Natural killer cell (primary cell): ENCODE measurements at regions of chrX and their contacts with region 1.

Region 1: DNA sequence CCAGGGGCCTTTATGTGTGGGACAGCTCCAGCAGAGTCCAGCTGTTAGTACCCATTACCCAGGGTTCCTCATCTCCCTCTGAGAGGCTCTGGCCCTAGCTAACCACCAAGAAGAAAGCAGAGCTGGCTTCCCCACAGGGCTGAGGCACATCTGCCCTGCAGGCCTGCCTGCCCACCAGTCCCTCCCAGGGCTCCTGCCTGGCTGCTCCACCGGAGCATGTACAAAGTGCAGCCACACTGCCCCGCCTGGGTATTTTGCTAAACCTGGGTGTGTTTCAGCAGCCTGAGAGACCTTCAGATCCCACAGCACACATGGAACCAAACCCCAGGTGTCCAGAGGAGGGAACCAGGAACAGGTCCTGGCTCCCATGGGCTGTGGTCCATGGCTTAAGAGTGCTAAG is 500.4 kb upstream of the KLHL4 start:
- DNase-seq: no peak
- ATAC-seq: no peak
- H3K4me3 ChIP-seq: no peak overlapping the region
- H3K4me3 Mint-ChIP-seq: no peak overlapping the region
- H3K27ac ChIP-seq: no peak overlapping the region
- H3K27ac Mint-ChIP-seq: no peak overlapping the region
- H3K4me1 ChIP-seq: no peaks in the 10 kb centered on the region
- H3K4me1 Mint-ChIP-seq: no peaks in the 10 kb centered on the region
- H3K27me3 ChIP-seq: no peaks in the 10 kb centered on the region
- H3K27me3 Mint-ChIP-seq: no peaks in the 10 kb centered on the region
- CTCF ChIP-seq: no peak

Region 2: DNA sequence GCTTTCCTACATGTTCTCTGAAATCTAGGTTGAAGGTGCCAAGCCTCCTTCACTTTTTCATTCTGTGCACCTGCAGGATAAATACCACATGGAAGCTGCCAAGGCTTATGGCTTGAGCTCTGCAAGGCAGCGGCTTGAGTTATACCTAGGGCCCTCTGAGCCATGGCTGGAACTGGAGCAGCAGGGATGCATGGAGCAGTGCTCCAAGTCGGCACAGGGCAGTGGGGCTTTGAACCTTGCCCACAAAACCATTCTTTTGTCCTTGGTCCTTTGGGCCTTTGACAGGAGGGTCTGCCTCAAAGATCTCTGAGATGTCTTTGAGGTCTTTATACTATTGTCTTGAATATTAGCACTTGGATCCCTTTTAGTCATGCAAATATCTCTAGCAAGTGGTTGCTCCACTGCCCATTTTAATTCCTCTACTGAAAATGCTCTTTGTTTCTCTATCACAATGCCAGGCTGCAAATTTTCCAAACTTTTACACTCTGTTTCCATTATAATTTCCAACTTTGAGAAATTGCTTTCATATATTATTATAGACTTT is 35.8 kb before region 1 on chrX:
- intact Hi-C with region 1: no loop called
- DNase-seq: no peak
- ATAC-seq: no peak
- H3K4me3 ChIP-seq: no peak overlapping the region
- H3K4me3 Mint-ChIP-seq: no peak overlapping the region
- H3K27ac ChIP-seq: no peak overlapping the region
- H3K27ac Mint-ChIP-seq: no peak overlapping the region
- H3K4me1 ChIP-seq: no peaks in the 10 kb centered on the region
- H3K4me1 Mint-ChIP-seq: no peaks in the 10 kb centered on the region
- H3K27me3 ChIP-seq: no peaks in the 10 kb centered on the region
- H3K27me3 Mint-ChIP-seq: no peaks in the 10 kb centered on the region
- CTCF ChIP-seq: no peak

Region 3: DNA sequence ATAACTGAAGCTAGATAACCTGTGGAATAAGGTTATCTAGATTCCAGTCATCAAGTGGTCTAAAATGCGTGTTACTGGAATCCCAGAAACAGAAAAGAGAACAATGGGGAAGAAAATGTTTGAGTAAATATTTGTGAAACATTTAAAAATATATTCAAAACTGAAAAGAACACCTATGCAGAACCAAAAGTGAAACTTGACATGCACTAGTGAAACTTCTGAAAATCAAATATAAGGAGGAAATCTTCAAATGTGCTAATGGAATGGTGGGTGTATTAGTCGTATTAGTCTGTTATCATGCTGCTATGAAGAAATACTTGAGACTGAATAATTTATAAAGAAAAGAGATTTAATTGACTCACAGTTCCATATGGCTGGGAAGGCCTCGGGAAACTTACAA is 12.0 kb before region 1 on chrX:
- intact Hi-C with region 1: loop called (anchors 1 kb)
- DNase-seq: no peak
- ATAC-seq: no peak
- H3K4me3 ChIP-seq: no peak overlapping the region
- H3K4me3 Mint-ChIP-seq: no peak overlapping the region
- H3K27ac ChIP-seq: no peak overlapping the region
- H3K27ac Mint-ChIP-seq: no peak overlapping the region
- H3K4me1 ChIP-seq: no peaks in the 10 kb centered on the region
- H3K4me1 Mint-ChIP-seq: no peaks in the 10 kb centered on the region
- H3K27me3 ChIP-seq: no peaks in the 10 kb centered on the region
- H3K27me3 Mint-ChIP-seq: no peaks in the 10 kb centered on the region
- CTCF ChIP-seq: no peak